ENCODE measurements at regions of chr11 and their contacts with region 1.

Region 1: DNA sequence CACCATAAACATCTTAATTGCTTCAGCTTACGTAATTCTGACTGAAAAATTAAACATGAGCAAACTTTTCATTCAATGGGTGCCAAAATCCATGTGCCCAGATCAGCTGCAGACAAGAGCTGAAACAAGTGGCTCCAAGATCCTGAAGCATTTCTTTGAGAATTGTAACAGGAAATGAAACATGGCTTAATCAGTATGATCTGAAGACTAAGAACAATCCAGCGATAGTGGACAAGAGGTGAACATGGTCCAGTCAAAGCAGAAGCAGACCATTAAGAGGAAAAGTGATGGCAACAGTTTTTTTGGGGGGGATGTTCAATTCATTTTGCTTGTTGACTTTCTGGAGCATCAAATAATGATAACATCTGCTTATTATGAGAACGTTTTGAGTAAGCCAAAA is 1964.5 kb upstream of the RAG2 start:
- DNase-seq: no peak
- H3K4me3 ChIP-seq: no peak overlapping the region
- H3K4me3 Mint-ChIP-seq: no peak overlapping the region
- H3K27ac ChIP-seq: no peak overlapping the region
- H3K27ac Mint-ChIP-seq: no peak overlapping the region
- H3K4me1 ChIP-seq: no peaks in the 10 kb centered on the region
- H3K4me1 Mint-ChIP-seq: no peaks in the 10 kb centered on the region
- H3K27me3 ChIP-seq: no peaks in the 10 kb centered on the region
- H3K27me3 Mint-ChIP-seq: no peaks in the 10 kb centered on the region
- CTCF ChIP-seq: no peak

Region 2: DNA sequence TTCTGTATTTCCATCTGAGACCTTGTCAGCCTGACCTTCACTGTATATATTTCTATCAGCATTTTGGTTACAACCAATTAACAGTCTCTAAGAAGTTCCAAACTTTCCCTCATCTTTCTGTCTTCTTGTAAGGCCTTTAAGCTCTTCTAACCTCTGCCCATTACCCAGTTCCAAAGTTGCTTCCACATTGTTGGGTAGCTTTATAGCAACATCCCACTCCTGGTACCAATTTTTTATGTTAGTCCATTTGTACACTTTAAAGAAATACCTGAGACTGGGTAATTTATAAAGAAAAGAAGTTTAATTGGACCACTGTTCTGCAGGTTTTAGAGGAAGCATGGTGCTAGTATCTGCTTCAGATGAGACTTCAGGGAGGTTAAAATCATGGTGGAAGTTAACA is 15.2 kb after region 1 on chr11:
- intact Hi-C with region 1: loop called in 1 of 2 experiments (anchors 1 kb)
- DNase-seq: no peak
- H3K4me3 ChIP-seq: no peak overlapping the region
- H3K4me3 Mint-ChIP-seq: no peak overlapping the region
- H3K27ac ChIP-seq: no peak overlapping the region
- H3K27ac Mint-ChIP-seq: no peak overlapping the region
- H3K4me1 ChIP-seq: no peaks in the 10 kb centered on the region
- H3K4me1 Mint-ChIP-seq: no peaks in the 10 kb centered on the region
- H3K27me3 ChIP-seq: no peaks in the 10 kb centered on the region
- H3K27me3 Mint-ChIP-seq: no peaks in the 10 kb centered on the region
- CTCF ChIP-seq: no peak

Region 3: DNA sequence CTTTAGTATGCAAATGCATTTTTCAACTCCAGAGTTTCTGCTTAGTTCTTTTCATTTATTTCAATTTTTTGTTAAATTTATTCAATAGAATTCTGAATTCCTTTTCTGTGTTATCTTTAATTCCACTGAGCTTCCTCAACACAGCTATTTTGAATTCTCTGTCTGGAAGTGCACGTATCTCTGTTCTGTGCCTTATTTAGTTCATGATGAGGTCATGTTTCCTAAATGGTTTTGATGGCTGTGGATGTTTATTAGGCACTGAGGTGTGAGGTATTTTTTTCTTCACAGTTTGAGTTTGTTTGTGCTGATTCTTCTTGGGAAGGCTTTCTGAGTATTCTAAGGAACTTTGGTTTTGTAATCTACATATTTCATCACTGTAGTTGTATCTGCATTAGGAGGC is 78.3 kb after region 1 on chr11:
- intact Hi-C with region 1: no loop called
- DNase-seq: no peak
- H3K4me3 ChIP-seq: no peak overlapping the region
- H3K4me3 Mint-ChIP-seq: no peak overlapping the region
- H3K27ac ChIP-seq: no peak overlapping the region
- H3K27ac Mint-ChIP-seq: no peak overlapping the region
- H3K4me1 ChIP-seq: no peaks in the 10 kb centered on the region
- H3K4me1 Mint-ChIP-seq: no peaks in the 10 kb centered on the region
- H3K27me3 ChIP-seq: no peaks in the 10 kb centered on the region
- H3K27me3 Mint-ChIP-seq: peaks cover 0 to 3% (median 0%) of the 10 kb centered on the region in 3 donors
- CTCF ChIP-seq: no peak